Esophagus muscularis mucosa (tissue), 4 donors: ENCODE measurements at regions of chrX and their contacts with region 1.

Region 1: DNA sequence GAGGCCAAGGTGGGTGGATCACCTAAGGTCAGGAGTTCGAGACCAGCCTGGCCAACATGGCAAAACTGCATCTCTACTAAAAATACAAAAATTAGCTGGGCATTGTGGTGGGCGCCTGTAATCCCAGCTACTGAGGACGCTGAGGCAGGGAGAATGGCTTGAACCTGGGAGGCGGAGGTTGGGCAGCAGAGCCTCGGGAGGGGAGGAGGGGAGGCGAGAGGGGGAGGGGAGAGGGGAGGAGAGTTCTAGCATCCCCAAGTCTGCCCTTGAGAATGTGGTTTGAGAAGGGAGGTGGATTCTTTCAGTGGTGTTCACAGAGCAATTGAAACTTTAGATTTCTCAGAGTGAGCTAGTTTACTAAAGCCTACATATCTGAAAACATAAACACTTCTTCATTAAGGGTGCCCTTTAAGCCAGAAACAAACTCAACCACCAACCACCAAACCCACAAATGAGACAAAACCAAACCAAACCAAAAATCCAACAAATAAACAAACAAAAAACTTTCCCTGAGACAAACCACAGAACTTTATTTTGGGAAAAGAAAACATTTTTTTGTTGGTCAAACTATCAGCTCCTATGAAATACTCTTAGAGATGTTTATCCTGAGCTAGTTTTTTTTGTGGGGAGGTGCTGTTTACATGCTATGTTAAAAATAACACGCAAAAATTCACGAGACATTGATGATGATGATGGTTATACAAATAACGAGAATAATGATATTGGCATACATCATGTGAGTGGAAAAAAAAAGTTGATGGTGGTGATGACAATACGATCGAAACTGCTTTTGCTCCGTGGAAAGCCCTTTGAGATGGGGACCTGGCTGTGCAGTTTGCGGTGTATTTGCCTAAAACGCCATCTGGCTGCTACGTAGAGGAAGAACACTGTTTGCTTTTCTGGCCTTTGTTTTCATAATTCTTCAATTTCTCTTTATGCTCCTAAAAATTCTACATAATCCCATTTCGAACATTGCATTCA is 98.2 kb upstream of the PRKX start:
- DNase-seq: no peak
- H3K4me3 ChIP-seq: no peak overlapping the region
- H3K27ac ChIP-seq: no peak overlapping the region
- H3K4me1 ChIP-seq: peaks cover 0 to 21% (median 5%) of the 10 kb centered on the region in 4 donors
- H3K27me3 ChIP-seq: peaks cover 0 to 11% (median 2%) of the 10 kb centered on the region in 4 donors
- CTCF ChIP-seq: peak; percentile 48 to 51 (median 51)
- EP300 ChIP-seq: no peak
- POLR2A ChIP-seq: no peak

Region 2: DNA sequence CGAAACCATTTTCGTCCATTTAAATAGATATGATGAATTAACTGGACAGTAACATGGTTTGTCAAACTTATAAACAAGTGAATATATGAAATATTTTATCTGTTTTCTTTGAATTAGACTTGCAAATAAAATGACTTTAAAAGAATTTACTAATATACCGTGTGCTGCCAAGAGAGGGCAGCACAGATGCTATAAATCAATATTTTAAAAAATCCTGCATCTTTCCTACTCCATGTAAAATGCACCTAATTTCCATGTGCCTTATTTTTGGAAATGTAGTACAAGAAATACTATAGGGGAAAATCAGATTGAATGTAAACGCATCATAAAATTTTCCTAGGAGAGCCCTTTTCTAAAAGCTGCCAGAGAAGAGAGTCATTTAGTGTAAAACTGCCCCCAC is 160.3 kb before region 1 on chrX:
- intact Hi-C with region 1: loop called (anchors 5 kb)
- DNase-seq: no peak
- H3K4me3 ChIP-seq: no peak overlapping the region
- H3K27ac ChIP-seq: no peak overlapping the region
- H3K4me1 ChIP-seq: no peaks in the 10 kb centered on the region
- H3K27me3 ChIP-seq: no peaks in the 10 kb centered on the region
- CTCF ChIP-seq: peak; percentile 35 to 41 (median 38)
- EP300 ChIP-seq: no peak
- POLR2A ChIP-seq: no peak

Region 3: DNA sequence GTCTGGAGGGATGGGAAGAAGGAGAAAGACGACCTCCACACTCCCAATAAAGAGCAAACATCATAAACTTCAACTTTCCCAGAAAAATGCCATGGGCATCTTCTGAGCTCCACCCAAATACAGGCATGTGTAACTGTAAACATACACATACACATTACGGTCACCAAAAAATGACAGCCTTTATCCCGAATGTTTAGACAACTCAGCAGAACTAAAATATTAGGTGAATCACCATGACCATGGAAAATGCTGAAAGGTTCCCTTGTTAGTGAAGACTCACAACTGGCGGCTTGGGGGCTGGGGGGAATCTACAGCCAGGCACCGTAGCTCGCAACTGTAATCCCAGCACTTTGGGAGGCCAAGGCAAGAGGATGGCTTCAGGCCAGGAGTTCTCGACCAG is 131.2 kb before region 1 on chrX:
- intact Hi-C with region 1: no loop called
- DNase-seq: no peak
- H3K4me3 ChIP-seq: no peak overlapping the region
- H3K27ac ChIP-seq: no peak overlapping the region
- H3K4me1 ChIP-seq: no peaks in the 10 kb centered on the region
- H3K27me3 ChIP-seq: no peaks in the 10 kb centered on the region
- CTCF ChIP-seq: no peak
- EP300 ChIP-seq: no peak
- POLR2A ChIP-seq: no peak